ENCODE measurements at regions of chr17 and their contacts with region 1.

Region 1: DNA sequence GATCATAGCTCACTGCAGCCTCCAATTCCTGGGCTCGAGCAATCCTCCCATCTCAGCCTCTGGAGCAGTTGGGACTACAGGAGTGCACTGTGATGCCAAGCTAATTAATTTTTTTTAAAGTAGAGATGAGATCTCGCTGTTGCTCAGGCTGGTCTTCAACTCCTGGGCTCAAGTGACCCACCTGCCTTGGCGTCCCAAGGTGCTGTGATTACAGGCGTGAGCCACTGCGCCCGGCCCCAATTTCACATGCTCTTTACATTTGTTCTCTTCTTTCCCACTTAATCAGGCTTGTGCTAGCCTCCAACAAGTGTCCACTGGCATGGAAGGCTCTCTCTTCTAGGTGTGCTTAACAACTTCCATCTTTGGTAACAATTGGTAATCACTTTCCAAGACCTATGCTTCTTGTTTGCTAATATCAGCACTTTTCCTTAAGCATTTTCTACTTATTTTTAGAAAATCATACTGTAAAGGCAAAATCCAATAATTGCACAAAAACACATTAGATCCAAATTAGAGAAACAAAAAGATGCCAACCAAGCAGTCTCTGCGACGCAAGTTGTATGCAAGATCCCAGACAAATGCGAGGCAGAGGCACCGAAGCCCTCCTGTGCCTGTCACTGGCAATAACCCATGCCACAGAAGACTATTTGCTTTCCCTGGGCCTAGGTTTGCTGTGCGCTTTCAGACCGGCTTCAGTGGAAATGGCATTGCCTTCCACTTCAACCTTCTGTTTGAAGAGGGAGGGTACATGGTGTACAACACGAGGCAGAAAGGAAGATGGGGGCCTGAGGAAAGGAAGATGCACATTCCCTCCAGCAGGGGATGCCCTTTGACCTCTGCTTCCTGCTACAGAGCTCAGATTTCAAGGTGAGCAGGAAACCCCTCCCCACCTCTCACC is 52.6 kb downstream of the NOS2 start:
- DNase-seq: no peak

Region 2: GRCh38 chr17:27489045-27489715 is 258.5 kb before region 1 on chr17:
- intact Hi-C with region 1: loop called in 1 of 2 experiments (anchors 10 kb)
- DNase-seq: peak; percentile 95

Region 3: GRCh38 chr17:27499446-27500260 is 248.1 kb before region 1 on chr17:
- intact Hi-C with region 1: no loop called
- DNase-seq: peak; percentile 38

Region 4: GRCh38 chr17:29549177-29549923 is 1801.6 kb after region 1 on chr17:
- intact Hi-C with region 1: no loop called
- DNase-seq: no peak

Measured in posterior vena cava (tissue), 2 donors.